ENCODE measurements at regions of chr12 and their contacts with region 1.

Region 1: DNA sequence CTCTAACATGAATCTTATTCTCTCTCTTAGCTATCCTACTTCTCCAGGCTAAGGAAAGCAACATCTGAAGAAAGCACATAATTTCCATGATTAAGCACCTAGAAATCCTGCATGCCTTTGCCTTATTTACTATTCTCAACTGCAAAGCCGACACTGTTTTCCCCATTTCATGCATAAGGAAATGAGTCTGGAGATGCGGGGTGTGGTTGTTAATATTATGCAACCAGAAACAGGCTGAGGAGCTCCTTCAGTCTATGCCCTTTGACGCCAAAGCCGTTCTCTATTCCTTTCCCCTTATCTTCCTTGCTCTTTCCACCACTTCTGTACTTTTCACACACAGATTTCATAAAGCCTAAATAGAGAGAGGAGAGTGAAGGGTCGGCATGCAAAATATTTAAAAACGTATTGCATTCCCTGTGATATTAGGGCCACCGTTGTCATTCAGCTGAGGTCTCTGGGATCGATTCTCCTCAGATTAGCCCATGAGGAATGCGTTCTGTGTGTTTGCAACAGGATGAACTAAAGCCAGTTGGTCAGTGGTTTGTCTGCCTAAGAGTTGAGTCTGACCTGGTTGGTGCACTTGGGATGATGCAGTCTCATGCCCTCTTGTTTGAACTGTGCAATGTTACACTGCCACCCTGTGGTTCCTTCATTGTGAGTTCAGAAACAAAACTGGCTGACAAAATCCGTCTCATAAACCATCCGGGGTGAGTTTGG is 53.1 kb upstream of the PLEKHG7 start:
- DNase-seq: peak in 1 of 2 donors; percentile 37
- H3K4me3 ChIP-seq: no peak overlapping the region
- H3K27ac ChIP-seq: no peak overlapping the region
- H3K4me1 ChIP-seq: peaks cover 0 to 9% (median 0%) of the 10 kb centered on the region in 4 donors
- H3K27me3 ChIP-seq: no peaks in the 10 kb centered on the region
- CTCF ChIP-seq: peak; percentile 71 to 79

Region 2: DNA sequence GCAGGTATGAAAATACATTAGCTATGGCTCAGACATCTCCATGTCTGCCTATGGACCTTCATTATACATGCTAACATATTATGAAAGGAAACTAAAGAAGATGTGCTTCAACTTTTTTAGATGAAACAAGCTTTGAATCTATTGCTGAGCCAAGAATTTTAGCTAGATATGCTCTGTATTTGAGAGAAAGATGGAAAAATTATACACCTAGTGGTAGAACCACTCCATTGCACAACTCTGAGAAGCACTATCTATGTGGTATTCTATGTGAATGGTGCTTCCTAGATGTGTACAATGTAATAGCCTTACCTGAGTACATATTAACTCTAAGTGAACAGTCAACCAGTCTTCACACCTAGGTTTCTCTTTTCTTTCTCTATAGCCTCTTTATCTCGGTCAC is 1662.1 kb before region 1 on chr12:
- intact Hi-C with region 1: loop called (anchors 10 kb)
- DNase-seq: no peak
- H3K4me3 ChIP-seq: no peak overlapping the region
- H3K27ac ChIP-seq: no peak overlapping the region
- H3K4me1 ChIP-seq: no peaks in the 10 kb centered on the region
- H3K27me3 ChIP-seq: no peaks in the 10 kb centered on the region
- CTCF ChIP-seq: no peak

Region 3: DNA sequence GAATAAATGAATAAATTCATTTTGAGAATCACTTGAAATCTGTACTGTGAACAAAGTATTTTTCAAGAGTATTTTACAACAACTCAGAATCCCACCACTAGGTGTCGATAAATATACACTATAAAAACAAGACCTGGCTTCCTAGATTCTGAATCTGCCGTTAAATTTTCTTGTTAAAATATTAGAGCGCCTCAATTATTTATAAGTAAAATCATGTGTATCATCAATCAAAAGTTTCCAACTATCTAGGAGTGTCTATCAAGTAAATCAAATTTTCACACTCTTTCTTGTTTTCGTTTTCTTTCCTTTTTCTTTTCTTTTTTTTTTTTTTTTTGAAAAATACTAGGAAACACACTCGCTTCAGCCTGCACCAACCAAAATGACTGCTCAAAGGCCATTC is 1287.8 kb before region 1 on chr12:
- intact Hi-C with region 1: loop called (anchors 10 kb)
- DNase-seq: no peak
- H3K4me3 ChIP-seq: no peak overlapping the region
- H3K27ac ChIP-seq: no peak overlapping the region
- H3K4me1 ChIP-seq: no peaks in the 10 kb centered on the region
- H3K27me3 ChIP-seq: no peaks in the 10 kb centered on the region
- CTCF ChIP-seq: peak; percentile 61 to 76

Measured in tibial artery (tissue), 4 donors.